ENCODE measurements at regions of chr1 and their contacts with region 1.

Region 1: DNA sequence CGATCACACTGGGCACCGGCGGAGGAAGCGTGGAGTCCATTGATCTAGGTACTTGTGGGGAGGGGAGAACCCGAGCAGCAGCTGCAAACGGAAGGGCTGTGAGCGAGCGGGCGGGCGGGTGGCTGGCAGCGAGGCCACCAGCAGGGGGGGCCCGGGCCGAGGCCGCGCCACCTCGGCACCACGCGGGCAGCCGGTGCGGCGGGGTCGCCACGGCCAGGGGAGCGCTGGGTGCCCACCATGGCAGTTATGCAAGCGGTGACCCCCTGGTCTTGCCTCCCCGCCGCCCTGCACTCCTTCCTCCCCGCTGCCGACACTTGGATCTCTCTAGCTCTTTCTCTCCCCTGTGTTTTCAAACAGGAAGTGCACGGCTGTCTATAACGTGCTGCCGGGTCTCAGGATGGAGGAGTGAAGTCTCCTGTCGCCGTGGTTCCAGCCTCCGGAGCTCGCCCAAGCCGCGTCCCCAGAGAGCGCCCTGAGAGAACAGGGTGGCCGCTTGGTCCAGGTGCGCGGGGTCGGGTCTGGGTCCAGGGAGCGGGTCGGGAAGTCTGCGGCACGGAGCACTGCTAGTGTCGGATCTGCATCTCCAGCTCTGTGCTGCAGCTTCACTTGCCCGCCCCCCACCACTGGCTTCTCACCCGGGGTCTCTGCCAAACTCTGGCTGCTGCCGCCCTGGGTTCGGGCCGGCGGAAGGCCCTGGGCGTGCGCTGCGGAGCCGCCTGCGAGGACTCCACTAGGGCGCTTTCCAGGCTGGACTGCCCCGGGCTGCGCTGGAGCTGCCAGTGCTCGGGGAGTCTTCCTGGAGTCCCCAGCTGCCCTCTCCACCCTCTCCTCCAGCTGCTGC is 22.7 kb downstream of the LRRC8D start:
- DNase-seq: peak; percentile 66
- ATAC-seq: peak; percentile 87
- H3K4me3 ChIP-seq: peak overlapping the region; percentile 93
- H3K27ac ChIP-seq: peak overlapping the region; percentile 92
- H3K4me1 ChIP-seq: peaks cover 6% of the 10 kb centered on the region
- H3K27me3 ChIP-seq: no peaks in the 10 kb centered on the region
- CTCF ChIP-seq: peak; percentile 64
- POLR2A ChIP-seq: 0 out of 2 replicates have a peak, but pooled peaks have one; percentile 34
- RAD21 ChIP-seq: peak; percentile 69

Region 2: DNA sequence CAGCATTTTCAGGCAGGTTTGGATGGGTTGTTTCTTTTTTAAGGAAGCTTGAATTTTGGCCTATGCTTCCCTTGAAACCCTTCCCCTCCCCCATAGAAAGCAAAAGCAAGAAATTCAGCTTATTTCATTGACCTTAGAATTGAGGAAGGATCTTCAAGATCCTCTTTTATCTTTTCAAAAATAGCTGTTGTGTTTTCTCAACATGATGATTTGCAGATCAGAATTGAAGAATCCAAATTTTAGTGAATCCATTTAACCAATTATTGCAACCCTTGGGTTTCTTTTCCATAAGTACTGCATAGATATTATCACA is 136.8 kb before region 1 on chr1:
- CTCF ChIA-PET with region 1: no interaction called
- POLR2A ChIA-PET with region 1: no interaction called
- dilution Hi-C with region 1: no loop called
- in situ Hi-C with region 1: no loop called
- intact Hi-C with region 1: no loop called
- DNase-seq: no peak
- ATAC-seq: no peak
- H3K4me3 ChIP-seq: no peak overlapping the region
- H3K27ac ChIP-seq: no peak overlapping the region
- H3K4me1 ChIP-seq: no peaks in the 10 kb centered on the region
- H3K27me3 ChIP-seq: no peaks in the 10 kb centered on the region
- CTCF ChIP-seq: no peak
- POLR2A ChIP-seq: no peak
- RAD21 ChIP-seq: no peak

Region 3: DNA sequence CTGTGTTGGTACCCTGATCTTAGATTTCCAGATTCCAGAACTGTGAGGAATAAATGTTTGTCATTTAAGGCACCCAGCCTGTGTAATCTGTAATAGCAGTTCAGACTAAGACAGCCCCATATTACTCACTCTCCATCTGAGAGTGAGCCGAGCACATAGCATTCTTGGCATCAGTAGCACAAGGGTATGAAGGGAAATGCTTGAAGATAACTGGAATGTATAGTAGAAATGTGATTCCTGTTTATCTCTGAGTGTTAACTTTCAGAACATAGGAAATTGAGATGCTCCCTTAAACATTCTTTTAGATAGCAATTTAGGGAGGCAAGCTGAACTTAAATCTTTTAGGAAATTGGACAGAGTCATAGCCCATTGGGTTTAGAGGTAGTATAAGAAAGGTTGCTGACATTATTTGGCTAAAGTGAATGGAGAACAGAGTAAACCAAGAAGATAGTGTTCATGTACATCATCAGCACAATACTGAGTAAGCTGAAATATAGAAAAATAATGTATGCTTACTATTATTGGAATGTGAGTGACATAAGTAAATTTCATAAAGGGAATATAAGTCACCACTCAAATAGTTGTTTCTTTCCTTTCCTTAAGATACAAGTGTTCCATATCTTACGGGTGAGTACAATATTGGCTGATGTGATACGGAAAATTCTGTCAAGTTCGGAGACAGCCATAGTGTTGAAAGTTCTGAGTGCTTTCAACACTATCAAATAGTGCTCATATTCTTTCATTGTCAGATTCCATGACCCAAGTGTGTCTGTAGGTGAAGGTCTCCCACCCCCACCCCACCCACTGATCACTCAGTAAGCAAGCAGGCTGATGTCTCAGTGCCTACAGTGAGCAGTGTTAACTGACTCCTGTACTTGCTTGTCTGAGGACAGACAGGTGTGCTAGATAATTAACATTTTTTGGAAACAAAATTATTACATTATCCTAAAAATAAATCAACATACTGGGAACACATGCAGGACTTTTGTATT is 51.0 kb after region 1 on chr1:
- CTCF ChIA-PET with region 1: no interaction called
- POLR2A ChIA-PET with region 1: no interaction called
- dilution Hi-C with region 1: no loop called
- in situ Hi-C with region 1: no loop called
- intact Hi-C with region 1: loop called (anchors 2 kb)
- DNase-seq: peak; percentile 91
- ATAC-seq: peak; percentile 97
- H3K4me3 ChIP-seq: no peak overlapping the region
- H3K27ac ChIP-seq: peak overlapping the region; percentile 77
- H3K4me1 ChIP-seq: peaks cover 18% of the 10 kb centered on the region
- H3K27me3 ChIP-seq: no peaks in the 10 kb centered on the region
- CTCF ChIP-seq: no peak
- POLR2A ChIP-seq: no peak
- RAD21 ChIP-seq: no peak